ENCODE measurements at regions of chr17 and their contacts with region 1.

Region 1: DNA sequence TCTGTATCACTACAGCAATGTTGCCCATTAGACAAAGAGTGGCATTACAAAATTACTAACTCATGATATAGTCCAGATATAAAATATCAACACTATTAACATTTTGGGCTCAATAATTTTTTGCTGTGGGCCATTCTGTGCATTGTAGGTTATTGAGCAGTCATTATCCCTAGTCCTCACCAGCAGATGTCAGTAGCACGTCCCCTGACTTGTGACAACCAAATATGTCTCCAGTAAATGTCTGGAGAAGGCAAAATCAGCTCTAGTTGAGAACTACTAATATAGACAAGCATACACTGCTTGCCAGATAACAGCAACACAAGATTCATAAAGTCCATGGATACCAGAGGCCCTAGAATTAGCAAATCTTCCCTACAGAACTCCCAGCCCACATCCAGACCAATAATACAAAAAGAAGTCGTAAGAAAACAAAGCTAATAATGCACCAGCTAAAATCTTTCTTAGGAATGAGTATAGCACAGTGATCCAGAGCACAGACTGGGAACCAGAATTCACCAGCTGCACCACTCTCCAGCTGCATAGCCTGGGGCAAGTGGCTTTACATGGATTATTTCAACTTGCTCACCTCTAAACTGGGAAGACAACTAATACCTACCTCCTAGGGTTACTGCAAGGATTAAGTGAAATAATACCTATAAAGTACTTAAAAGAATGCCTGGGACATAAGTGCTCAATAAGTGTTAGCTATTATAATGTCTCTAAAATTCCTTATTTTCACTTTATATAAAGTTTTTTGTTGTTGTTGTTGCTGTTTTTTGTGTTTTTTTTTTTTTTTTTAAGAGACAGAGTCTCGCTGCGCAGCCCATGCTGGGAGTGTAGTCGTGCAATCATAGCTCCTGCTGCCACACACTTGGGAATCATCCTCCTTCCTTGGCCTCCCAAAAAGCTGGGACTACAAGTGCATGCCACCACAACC is 23.7 kb downstream of the HELZ start:
- DNase-seq: no peak
- H3K4me3 ChIP-seq: no peak overlapping the region
- H3K27me3 ChIP-seq: no peaks in the 10 kb centered on the region
- CTCF ChIP-seq: peak; percentile 56

Region 2: GRCh38 chr17:67157732-67158639 is 63.3 kb before region 1 on chr17:
- CTCF ChIA-PET with region 1: no interaction called
- POLR2A ChIA-PET with region 1: no interaction called
- DNase-seq: no peak
- H3K4me3 ChIP-seq: no peak overlapping the region
- H3K27me3 ChIP-seq: no peaks in the 10 kb centered on the region
- CTCF ChIP-seq: peak; percentile 48

Region 3: GRCh38 chr17:67239597-67239996 is 18.3 kb after region 1 on chr17:
- CTCF ChIA-PET with region 1: interaction called, 10 read pairs
- POLR2A ChIA-PET with region 1: no interaction called
- DNase-seq: no peak
- H3K4me3 ChIP-seq: no peak overlapping the region
- H3K27me3 ChIP-seq: no peaks in the 10 kb centered on the region
- CTCF ChIP-seq: no peak

Region 4: GRCh38 chr17:67293251-67294203 is 72.2 kb after region 1 on chr17:
- CTCF ChIA-PET with region 1: interaction called, 28 read pairs
- POLR2A ChIA-PET with region 1: no interaction called
- DNase-seq: no peak
- H3K4me3 ChIP-seq: no peak overlapping the region
- H3K27me3 ChIP-seq: no peaks in the 10 kb centered on the region; the same call in 1 of the 2 replicates
- CTCF ChIP-seq: peak; percentile 73

Measured in BJ (cell line).